ENCODE measurements at regions of chr4 and their contacts with region 1.

Region 1: GRCh38 chr4:101790521-101791188 is at the start of gene BANK1:
- DNase-seq: peak; percentile 43
- ATAC-seq: peak; percentile 100
- H3K4me3 ChIP-seq: peak within 1 kb of the TSS; percentile 59
- H3K27ac ChIP-seq: no peak within 1 kb of the TSS
- H3K4me1 ChIP-seq: peaks cover 9% of the 10 kb centered on the region
- H3K27me3 ChIP-seq: peaks cover 0 to 3% of the 10 kb centered on the region in 2 experiments; a peak in 1 of 4 replicates
- CTCF ChIP-seq: 0 out of 6 replicates have a peak, but pooled peaks of 1 of the 3 experiments have one; percentile 0
- EP300 ChIP-seq: peak; percentile 79 to 94
- POLR2A ChIP-seq: no peak
- RAD21 ChIP-seq: peak; percentile 18; the same call in 1 of the 2 replicates
- polyA plus RNA-seq, gene BANK1: 0.22 to 0.35 TPM

Region 2: DNA sequence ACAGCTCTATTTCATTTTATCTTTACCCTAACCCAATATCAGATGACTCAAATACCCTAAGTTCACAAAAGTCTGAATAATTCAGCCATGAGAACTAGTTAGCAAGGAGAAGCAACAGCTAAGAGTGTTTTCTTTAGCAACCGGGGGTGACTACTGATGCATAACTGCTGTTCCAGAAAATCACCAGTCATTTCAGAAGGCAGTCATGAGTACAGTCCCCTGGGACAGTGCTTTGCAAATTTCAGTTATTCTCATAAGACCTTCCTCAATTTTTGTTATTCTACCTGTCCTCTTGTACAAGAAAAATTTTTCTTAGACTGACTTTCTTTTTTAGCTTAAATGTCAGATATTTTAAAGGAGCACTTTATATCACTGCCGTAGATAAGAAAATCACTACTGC is 16.3 kb after region 1 on chr4:
- CTCF ChIA-PET with region 1: no interaction called
- POLR2A ChIA-PET with region 1: no interaction called
- RAD21 ChIA-PET with region 1: interaction called, 4 read pairs
- SMC1A ChIA-PET with region 1: interaction called, 4 read pairs
- in situ Hi-C with region 1: no loop called
- intact Hi-C with region 1: loop called (anchors 2 kb)
- DNase-seq: peak; percentile 77
- ATAC-seq: peak; percentile 99
- H3K4me3 ChIP-seq: no peak overlapping the region
- H3K27ac ChIP-seq: no peak overlapping the region
- H3K4me1 ChIP-seq: peaks cover 6% of the 10 kb centered on the region
- H3K27me3 ChIP-seq: no peaks in the 10 kb centered on the region; a peak in 1 of 4 replicates
- CTCF ChIP-seq: no peak
- EP300 ChIP-seq: peak; percentile 89 to 90; a peak in 3 of 4 replicates
- POLR2A ChIP-seq: no peak
- RAD21 ChIP-seq: peak; percentile 36